Left lung (tissue), 14 donors: ENCODE measurements at regions of chr16 and their contacts with region 1.

Region 1: GRCh38 chr16:53054670-53055485 is at the start of gene CHD9:
- DNase-seq: peak; percentile 85 to 96 (median 94)
- ATAC-seq: peak; percentile 94
- H3K4me3 ChIP-seq: peak within 1 kb of the TSS; percentile 65 to 69
- H3K27ac ChIP-seq: peak within 1 kb of the TSS; percentile 89 to 94
- H3K4me1 ChIP-seq: peaks cover 11 to 59% of the 10 kb centered on the region in 2 donors
- H3K27me3 ChIP-seq: no peaks in the 10 kb centered on the region
- CTCF ChIP-seq: peak; percentile 99 to 100
- polyA plus RNA-seq, gene CHD9: 65.6 to 88.0 (median 73.0) TPM

Region 2: DNA sequence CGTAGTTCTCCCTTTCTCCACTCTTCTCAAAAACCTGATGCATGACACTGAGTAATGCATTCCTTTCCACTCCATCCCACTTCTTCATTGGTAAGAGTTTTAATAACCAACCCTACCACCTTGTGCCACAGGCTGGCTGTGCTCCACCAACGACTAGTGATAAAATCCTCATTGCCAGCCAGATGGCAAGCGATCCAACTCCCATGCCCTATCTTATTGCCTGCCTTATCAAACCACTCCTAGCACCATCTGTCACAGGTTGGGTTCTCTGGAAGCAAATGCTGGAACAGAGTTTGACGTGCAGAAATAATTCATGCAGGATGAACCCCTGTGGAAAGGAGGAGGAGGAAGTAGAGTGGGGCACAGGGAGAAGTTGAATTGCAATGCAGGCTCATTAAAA is 101.7 kb before region 1 on chr16:
- intact Hi-C with region 1: no loop called
- DNase-seq: no peak
- ATAC-seq: no peak
- H3K4me3 ChIP-seq: no peak overlapping the region
- H3K27ac ChIP-seq: no peak overlapping the region
- H3K4me1 ChIP-seq: no peaks in the 10 kb centered on the region
- H3K27me3 ChIP-seq: no peaks in the 10 kb centered on the region
- CTCF ChIP-seq: no peak

Region 3: GRCh38 chr16:53111078-53111791 is 56.4 kb after region 1 on chr16:
- intact Hi-C with region 1: no loop called
- DNase-seq: no peak
- ATAC-seq: no peak
- H3K4me3 ChIP-seq: no peak overlapping the region
- H3K27ac ChIP-seq: no peak overlapping the region
- H3K4me1 ChIP-seq: no peaks in the 10 kb centered on the region
- H3K27me3 ChIP-seq: no peaks in the 10 kb centered on the region
- CTCF ChIP-seq: no peak

Region 4: GRCh38 chr16:53159781-53160436 is 105.0 kb after region 1 on chr16:
- intact Hi-C with region 1: loop called in 1 of 2 experiments (anchors 10 kb)
- DNase-seq: peak in 2 of 4 donors; percentile 26 to 55
- ATAC-seq: peak; percentile 70
- H3K4me3 ChIP-seq: no peak overlapping the region
- H3K27ac ChIP-seq: no peak overlapping the region
- H3K4me1 ChIP-seq: peaks cover 0 to 7% of the 10 kb centered on the region in 2 donors
- H3K27me3 ChIP-seq: no peaks in the 10 kb centered on the region
- CTCF ChIP-seq: peak; percentile 66 to 68

Region 5: DNA sequence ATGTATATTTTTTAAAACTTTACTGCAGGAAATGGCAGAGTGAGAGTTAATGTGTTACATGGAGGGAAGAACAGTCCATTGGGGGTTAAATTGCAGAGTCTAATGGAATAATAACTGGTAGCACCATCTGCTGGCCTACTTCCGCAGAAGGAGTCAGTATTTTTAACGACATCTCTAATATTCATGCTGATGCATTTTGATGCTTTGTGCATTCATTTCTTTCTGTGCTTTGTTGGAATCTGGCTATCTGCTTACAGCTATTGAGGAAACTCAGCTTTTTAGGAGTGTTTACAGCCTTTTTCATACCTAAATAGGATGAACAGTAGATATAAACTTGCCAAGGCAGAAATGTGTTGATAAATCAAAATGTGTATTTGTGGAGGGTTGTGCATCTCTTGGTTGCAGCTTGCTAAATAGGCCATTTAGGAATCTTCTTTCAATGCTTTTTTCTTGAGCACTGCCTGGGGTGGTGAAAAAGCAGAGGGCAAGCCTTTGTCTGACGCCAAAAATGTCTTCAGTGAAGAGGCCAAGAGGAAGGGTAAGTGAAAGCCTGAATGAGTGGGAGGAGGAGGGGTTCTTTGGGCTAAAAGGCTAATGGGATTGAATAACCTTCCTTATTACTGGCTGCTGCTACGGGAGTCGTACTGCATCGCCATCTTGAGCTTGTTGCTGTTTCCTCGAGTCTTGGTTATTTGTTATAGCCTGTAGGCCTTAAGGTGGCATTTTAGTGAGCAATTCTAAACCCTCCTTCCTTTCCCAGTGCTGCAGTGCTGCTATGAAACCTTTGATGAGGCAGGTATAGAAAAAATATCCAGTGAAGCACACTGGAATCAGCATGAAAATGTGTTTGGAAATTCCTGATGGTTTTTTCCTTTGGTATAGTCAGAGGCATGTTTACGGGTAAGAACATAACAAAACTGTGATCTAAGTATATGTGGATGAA is 153.2 kb after region 1 on chr16:
- intact Hi-C with region 1: loop called in 1 of 2 experiments (anchors 10 kb)
- DNase-seq: peak in 3 of 4 donors; percentile 37 to 90 (median 83)
- ATAC-seq: peak; percentile 95
- H3K4me3 ChIP-seq: peak overlapping the region; percentile 27 to 37
- H3K27ac ChIP-seq: peak overlapping the region; percentile 86 to 90
- H3K4me1 ChIP-seq: peaks cover 26 to 59% of the 10 kb centered on the region in 2 donors
- H3K27me3 ChIP-seq: no peaks in the 10 kb centered on the region
- CTCF ChIP-seq: peak; percentile 30 to 31